ENCODE measurements at regions of chr4 and their contacts with region 1.

Region 1: DNA sequence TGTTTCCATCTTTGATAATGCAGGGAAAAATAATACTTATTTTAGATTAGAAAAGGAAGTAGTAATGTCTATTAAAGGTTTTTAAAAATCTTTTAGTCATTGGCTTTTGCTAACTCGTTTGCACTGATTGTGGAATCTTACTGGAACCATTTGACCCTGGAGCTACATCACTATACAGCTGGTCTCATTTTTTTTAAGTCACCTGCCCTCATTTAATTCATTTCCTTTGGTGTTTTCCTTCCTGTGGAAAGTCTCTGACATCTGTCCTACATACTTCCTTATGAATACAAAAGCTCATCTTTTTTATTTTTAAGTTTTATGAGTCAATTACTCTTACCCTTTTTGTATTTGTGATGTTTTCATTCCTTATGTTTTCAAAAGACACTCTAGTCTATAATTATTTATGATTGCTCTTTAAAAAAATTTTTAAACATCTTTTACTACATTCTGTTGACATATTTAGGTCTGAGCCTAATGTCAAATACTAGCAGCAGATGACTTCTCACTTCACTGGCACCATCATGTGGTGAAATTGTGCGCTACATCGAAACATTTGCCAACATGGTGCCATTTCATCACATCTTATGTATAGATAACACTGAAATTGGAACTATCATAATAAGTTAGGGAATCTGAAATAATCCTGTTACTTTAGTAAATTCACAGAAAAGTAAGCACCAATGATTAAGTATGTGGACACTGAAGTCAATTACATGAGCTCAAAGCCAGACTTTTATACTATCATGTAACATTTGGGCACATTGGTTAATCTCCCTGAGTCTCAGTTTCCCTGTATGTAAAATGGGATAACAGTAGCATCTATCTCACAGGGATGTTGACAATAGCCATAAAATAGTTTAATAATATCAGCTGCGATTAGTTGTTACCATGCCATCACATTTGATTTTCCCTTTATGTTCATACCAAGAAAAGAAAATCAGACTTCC is 9.4 kb upstream of the MMAA start:
- DNase-seq: no peak

Region 2: DNA sequence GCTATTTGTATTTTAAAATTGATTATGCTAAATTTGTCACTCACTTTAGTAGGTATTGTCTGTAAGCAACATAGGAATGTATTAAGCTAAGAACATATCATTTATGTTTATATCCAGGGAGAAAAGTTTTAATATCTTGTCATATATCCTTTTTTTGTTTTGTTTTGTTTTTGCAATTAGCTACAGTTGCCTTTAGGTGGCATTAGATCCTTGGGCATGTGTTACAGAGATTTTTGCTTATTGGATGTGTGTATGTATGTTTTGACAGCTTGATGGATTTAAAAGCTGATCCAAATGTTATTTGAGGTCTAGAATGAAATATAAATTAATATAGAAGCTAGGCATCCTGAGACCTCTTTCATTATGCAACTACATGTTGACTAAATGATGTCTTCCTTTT is 393.2 kb before region 1 on chr4:
- intact Hi-C with region 1: loop called (anchors 5 kb)
- DNase-seq: no peak

Region 3: GRCh38 chr4:145234091-145234706 is 375.6 kb before region 1 on chr4:
- intact Hi-C with region 1: loop called in 1 of 2 experiments (anchors 5 kb)
- DNase-seq: no peak

Measured in posterior vena cava (tissue), 2 donors.